ENCODE measurements at regions of chr10 and their contacts with region 1.

Region 1: GRCh38 chr10:51063659-51064535 is 10.4 kb upstream of the PRKG1 start:
- DNase-seq: no peak
- H3K4me3 ChIP-seq: no peak overlapping the region
- H3K27ac ChIP-seq: no peak overlapping the region
- H3K4me1 ChIP-seq: no peaks in the 10 kb centered on the region
- H3K27me3 ChIP-seq: no peaks in the 10 kb centered on the region
- CTCF ChIP-seq: peak; percentile 59 to 71 (median 64)
- POLR2A ChIP-seq: no peak

Region 2: GRCh38 chr10:51422311-51423120 is 358.6 kb after region 1 on chr10:
- intact Hi-C with region 1: loop called (anchors 10 kb)
- DNase-seq: peak; percentile 60 to 73
- H3K4me3 ChIP-seq: no peak overlapping the region
- H3K27ac ChIP-seq: peak overlapping the region; percentile 72 to 77
- H3K4me1 ChIP-seq: peaks cover 0 to 10% of the 10 kb centered on the region in 2 donors
- H3K27me3 ChIP-seq: no peaks in the 10 kb centered on the region
- CTCF ChIP-seq: peak; percentile 64 to 88 (median 73)
- POLR2A ChIP-seq: no peak

Region 3: GRCh38 chr10:51564896-51565510 is 501.1 kb after region 1 on chr10:
- intact Hi-C with region 1: no loop called
- DNase-seq: no peak
- H3K4me3 ChIP-seq: no peak overlapping the region
- H3K27ac ChIP-seq: no peak overlapping the region
- H3K4me1 ChIP-seq: no peaks in the 10 kb centered on the region
- H3K27me3 ChIP-seq: no peaks in the 10 kb centered on the region
- CTCF ChIP-seq: no peak
- POLR2A ChIP-seq: no peak